Spleen (tissue), 13 donors: ENCODE measurements at regions of chr1 and their contacts with region 1.

Region 1: DNA sequence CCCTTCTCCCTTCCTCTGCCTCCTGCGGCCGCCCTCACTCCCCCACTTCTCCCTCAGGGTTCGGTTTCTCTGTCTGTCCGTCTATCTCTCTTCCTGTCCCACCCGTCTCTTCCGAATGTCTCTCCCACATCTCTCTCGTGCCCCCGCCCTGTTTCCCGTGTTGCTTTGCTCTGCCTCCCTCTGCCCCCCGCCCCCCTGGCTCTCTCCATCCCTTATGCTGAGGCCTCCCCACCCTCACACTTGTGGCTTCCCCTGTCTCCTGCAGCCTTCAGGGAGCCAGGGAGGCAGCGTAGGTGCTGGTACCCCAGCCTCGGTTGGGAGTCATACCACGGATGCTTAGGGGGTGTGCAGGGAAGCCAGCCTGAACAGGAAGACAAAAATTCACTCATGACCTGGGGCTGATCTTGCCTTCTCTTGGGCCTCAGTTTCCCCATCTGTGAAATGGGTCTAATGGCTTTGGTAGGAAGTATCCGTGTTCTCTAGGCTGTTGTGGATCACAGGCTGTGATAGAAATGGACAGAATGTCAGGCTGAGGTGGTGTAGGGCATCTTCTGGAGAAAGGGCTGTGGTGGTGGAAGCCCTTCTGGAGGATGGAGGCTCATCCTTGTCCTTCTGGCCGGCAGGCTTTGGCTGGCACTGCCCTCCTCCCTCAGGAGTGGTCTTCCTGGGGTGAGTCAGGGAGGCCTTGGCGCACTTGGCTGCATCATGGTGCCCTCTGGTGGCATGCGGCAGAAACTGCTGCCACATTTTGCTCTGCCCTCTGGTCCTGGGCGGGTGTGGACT is 55.5 kb downstream of the FOXO6 start:
- DNase-seq: peak; percentile 87
- H3K4me3 ChIP-seq: no peak overlapping the region
- H3K27ac ChIP-seq: no peak overlapping the region
- H3K4me1 ChIP-seq: peaks cover 0 to 74% (median 12%) of the 10 kb centered on the region in 6 donors
- H3K27me3 ChIP-seq: no peaks in the 10 kb centered on the region
- CTCF ChIP-seq: peak; percentile 81 to 92 (median 87)
- POLR2A ChIP-seq: no peak

Region 2: GRCh38 chr1:40784771-40785151 is 632.0 kb before region 1 on chr1:
- intact Hi-C with region 1: no loop called
- DNase-seq: peak; percentile 58
- H3K4me3 ChIP-seq: peak overlapping the region in 1 of 8 donors; percentile 71
- H3K27ac ChIP-seq: no peak overlapping the region
- H3K4me1 ChIP-seq: peaks cover 7 to 31% (median 22%) of the 10 kb centered on the region in 6 donors
- H3K27me3 ChIP-seq: peaks cover 0 to 47% (median 22%) of the 10 kb centered on the region in 7 donors
- CTCF ChIP-seq: no peak
- POLR2A ChIP-seq: no peak

Region 3: GRCh38 chr1:41122851-41123507 is 293.8 kb before region 1 on chr1:
- intact Hi-C with region 1: no loop called
- DNase-seq: no peak
- H3K4me3 ChIP-seq: no peak overlapping the region
- H3K27ac ChIP-seq: no peak overlapping the region
- H3K4me1 ChIP-seq: no peaks in the 10 kb centered on the region
- H3K27me3 ChIP-seq: no peaks in the 10 kb centered on the region
- CTCF ChIP-seq: peak in 9 of 11 experiments; percentile 6 to 53 (median 35)
- POLR2A ChIP-seq: no peak

Region 4: GRCh38 chr1:41268154-41268770 is 148.5 kb before region 1 on chr1:
- intact Hi-C with region 1: loop called (anchors 5 kb)
- DNase-seq: peak; percentile 90
- H3K4me3 ChIP-seq: no peak overlapping the region
- H3K27ac ChIP-seq: no peak overlapping the region
- H3K4me1 ChIP-seq: peaks cover 0 to 9% (median 3%) of the 10 kb centered on the region in 6 donors
- H3K27me3 ChIP-seq: peaks cover 0 to 3% (median 0%) of the 10 kb centered on the region in 7 donors
- CTCF ChIP-seq: peak; percentile 83 to 97 (median 96)
- POLR2A ChIP-seq: no peak

Region 5: GRCh38 chr1:41282679-41283317 is 133.9 kb before region 1 on chr1:
- intact Hi-C with region 1: loop called (anchors 5 kb)
- DNase-seq: no peak
- H3K4me3 ChIP-seq: no peak overlapping the region
- H3K27ac ChIP-seq: peak overlapping the region in 3 of 8 donors; percentile 27 to 62 (median 54)
- H3K4me1 ChIP-seq: peaks cover 0 to 48% (median 12%) of the 10 kb centered on the region in 6 donors
- H3K27me3 ChIP-seq: peaks cover 0 to 38% (median 0%) of the 10 kb centered on the region in 7 donors
- CTCF ChIP-seq: peak; percentile 32 to 84 (median 78)
- POLR2A ChIP-seq: no peak